Naive thymus-derived CD4-positive, alpha-beta T cell (primary cell): ENCODE measurements at regions of chr11 and their contacts with region 1.

Region 1: DNA sequence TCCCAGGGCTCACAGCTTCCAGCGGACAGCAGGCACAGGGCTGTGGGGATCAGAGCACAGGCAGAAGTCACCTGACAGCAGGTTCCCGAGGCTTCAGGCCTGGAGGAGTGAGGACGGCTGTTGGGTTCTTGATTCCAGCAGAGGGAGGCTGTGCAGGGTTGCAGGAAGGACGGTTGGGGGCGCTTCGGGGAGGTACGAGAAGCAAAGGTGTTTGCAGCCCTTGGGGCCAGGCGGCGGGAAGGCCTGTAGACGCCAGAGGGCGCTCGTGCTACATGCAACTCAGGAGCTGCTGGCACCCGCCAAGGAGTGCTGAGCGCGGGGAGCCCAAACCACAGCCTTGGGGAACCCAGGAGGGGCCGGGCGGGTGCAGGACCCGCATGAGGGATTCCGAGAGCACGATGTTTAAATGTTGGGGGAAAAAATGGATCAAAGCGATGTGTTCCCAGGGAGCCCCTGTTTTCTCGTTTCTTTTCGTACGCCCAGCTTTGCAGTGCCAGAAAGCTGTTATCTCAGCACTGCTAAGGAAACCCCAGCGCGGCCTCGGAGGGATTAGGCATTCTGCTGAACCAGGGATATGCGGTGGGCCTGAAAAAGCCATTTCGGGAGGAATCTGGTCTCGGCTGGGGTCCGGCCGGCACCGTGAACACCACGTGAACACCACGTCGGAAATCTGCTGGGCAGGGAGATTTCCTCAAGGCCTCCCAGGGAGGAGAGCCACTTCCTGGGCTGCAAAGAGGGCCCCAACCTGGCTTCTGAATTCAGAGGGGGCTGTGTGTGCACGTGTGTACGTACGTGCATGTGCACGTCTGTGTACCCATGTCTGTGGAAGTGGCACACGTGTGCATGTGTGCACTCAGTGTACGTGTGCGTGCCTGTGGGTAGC is 88.1 kb downstream of the KCNQ1 start:
- DNase-seq: peak; percentile 81 to 95 (median 89)
- ATAC-seq: peak; percentile 91
- H3K4me3 ChIP-seq: peak overlapping the region; percentile 21
- H3K4me3 Mint-ChIP-seq: peak overlapping the region; percentile 64 to 83 (median 76)
- H3K27ac ChIP-seq: no peak overlapping the region
- H3K27ac Mint-ChIP-seq: peak overlapping the region in 5 of 9 donors; percentile 5 to 88 (median 71)
- H3K4me1 ChIP-seq: peaks cover 4 to 15% of the 10 kb centered on the region in 2 donors
- H3K4me1 Mint-ChIP-seq: peaks cover 9 to 29% (median 25%) of the 10 kb centered on the region in 7 donors
- H3K27me3 ChIP-seq: no peaks in the 10 kb centered on the region
- H3K27me3 Mint-ChIP-seq: peaks cover 0 to 2% (median 0%) of the 10 kb centered on the region in 5 donors

Region 2: GRCh38 chr11:2298795-2299761 is 233.9 kb before region 1 on chr11:
- CTCF ChIA-PET with region 1: no interaction called
- POLR2A ChIA-PET with region 1: no interaction called
- intact Hi-C with region 1: loop called in 1 of 2 experiments (anchors 5 kb)
- DNase-seq: peak in 2 of 9 donors; percentile 30 to 32
- ATAC-seq: no peak
- H3K4me3 ChIP-seq: no peak overlapping the region
- H3K4me3 Mint-ChIP-seq: peak overlapping the region; percentile 52 to 98 (median 75)
- H3K27ac ChIP-seq: peak overlapping the region; percentile 58
- H3K27ac Mint-ChIP-seq: peak overlapping the region; percentile 63 to 91 (median 79)
- H3K4me1 ChIP-seq: peaks cover 30 to 44% of the 10 kb centered on the region in 2 donors
- H3K4me1 Mint-ChIP-seq: peaks cover 19 to 51% (median 38%) of the 10 kb centered on the region in 7 donors
- H3K27me3 ChIP-seq: no peaks in the 10 kb centered on the region
- H3K27me3 Mint-ChIP-seq: peaks cover 0 to 5% (median 0%) of the 10 kb centered on the region in 5 donors

Region 3: GRCh38 chr11:2377511-2378443 is 155.2 kb before region 1 on chr11:
- CTCF ChIA-PET with region 1: no interaction called
- POLR2A ChIA-PET with region 1: no interaction called
- intact Hi-C with region 1: no loop called
- DNase-seq: peak in 8 of 9 donors; percentile 34 to 73 (median 52)
- ATAC-seq: peak; percentile 54
- H3K4me3 ChIP-seq: peak overlapping the region; percentile 83
- H3K4me3 Mint-ChIP-seq: peak overlapping the region; percentile 71 to 89 (median 84)
- H3K27ac ChIP-seq: peak overlapping the region; percentile 89
- H3K27ac Mint-ChIP-seq: peak overlapping the region in 7 of 9 donors; percentile 57 to 89 (median 81)
- H3K4me1 ChIP-seq: peaks cover 19 to 21% of the 10 kb centered on the region in 2 donors
- H3K4me1 Mint-ChIP-seq: peaks cover 13 to 44% (median 20%) of the 10 kb centered on the region in 7 donors
- H3K27me3 ChIP-seq: no peaks in the 10 kb centered on the region
- H3K27me3 Mint-ChIP-seq: peaks cover 0 to 7% (median 0%) of the 10 kb centered on the region in 5 donors

Region 4: DNA sequence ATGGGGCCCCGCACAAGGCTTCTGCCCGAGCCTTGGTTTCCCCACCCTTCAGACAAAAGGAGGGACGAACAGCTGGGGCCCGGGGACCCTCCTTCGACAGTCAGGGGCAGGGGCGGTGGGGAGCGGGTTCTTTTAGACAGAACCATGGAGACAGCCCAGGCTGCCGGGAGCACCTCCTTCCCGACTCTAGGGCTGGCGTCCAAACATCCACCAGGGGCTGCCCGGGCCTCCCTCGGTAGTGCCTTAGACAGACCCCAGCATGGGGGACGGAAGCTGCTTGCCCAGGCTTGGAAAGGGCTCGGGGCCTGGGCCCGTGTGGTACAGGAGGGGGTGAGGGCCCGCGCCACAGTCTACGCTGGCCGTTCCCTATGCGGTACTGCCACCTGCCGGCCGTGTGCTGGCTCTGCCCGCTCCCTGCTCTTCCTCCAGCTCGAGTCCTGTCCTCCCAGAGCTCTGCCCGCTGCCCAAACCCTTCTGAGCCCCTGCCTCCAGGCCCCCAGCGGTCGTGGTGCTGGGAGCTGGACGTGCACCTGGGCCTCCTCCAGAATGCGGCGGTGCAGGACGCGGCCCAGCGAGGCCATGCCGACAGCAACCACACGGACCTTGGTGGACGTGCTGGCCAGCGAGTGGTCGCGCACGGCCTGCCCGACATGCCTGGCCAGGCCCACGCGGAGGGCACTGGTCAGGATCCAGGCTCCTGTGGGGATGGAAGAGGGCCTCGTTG is 112.3 kb before region 1 on chr11:
- CTCF ChIA-PET with region 1: interaction called, 77 read pairs
- POLR2A ChIA-PET with region 1: no interaction called
- intact Hi-C with region 1: no loop called
- DNase-seq: peak; percentile 44 to 74 (median 70)
- ATAC-seq: peak; percentile 93
- H3K4me3 ChIP-seq: no peak overlapping the region
- H3K4me3 Mint-ChIP-seq: no peak overlapping the region
- H3K27ac ChIP-seq: no peak overlapping the region
- H3K27ac Mint-ChIP-seq: no peak overlapping the region
- H3K4me1 ChIP-seq: peaks cover 0 to 10% of the 10 kb centered on the region in 2 donors
- H3K4me1 Mint-ChIP-seq: peaks cover 0 to 3% (median 2%) of the 10 kb centered on the region in 7 donors
- H3K27me3 ChIP-seq: no peaks in the 10 kb centered on the region
- H3K27me3 Mint-ChIP-seq: no peaks in the 10 kb centered on the region

Region 5: DNA sequence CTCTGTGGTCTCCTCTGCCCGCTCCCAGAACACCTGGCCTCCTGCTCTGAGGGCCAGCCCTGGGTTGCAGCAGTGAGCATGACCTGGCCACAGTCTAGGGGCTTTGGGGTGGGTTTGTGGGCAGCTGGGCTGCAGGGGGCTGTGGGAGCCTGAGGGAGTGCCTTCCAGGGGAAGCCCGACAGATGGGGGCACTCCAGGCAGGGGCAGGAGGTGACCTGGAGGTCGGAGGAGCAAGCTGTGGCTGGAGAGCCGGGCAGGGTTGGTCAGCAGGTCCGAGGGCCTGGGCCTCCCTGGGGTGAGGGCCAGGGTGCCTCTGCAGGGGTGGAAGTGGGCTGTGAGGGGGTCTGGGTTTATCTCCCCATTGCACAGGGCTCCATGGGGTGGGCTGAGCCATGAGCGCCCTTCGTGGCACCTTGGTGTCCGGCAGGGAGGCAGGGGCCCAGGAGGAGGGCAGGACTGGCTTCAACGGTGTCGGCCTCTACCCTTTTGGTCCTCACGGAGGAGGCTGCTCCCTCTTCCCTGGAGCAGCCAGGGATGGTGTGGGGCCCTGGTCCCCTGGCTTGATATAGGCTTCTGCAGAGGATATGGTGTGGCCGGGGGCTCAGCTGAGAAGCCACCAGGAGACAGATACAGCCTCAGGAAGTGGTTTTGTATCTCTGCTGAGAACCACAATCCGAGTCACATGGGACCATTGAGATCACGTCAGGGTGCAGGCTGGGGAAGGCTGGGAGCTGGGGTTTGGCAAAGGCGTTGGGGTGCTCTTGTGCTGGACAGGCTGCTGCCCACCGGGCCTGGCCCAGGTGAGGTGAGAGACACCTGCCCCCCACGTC is 65.9 kb before region 1 on chr11:
- CTCF ChIA-PET with region 1: interaction called, 9 read pairs
- POLR2A ChIA-PET with region 1: no interaction called
- intact Hi-C with region 1: loop called in 1 of 2 experiments (anchors 2 kb)
- DNase-seq: peak in 8 of 9 donors; percentile 53 to 80 (median 74)
- ATAC-seq: peak; percentile 95
- H3K4me3 ChIP-seq: peak overlapping the region; percentile 45
- H3K4me3 Mint-ChIP-seq: peak overlapping the region; percentile 75 to 93 (median 84)
- H3K27ac ChIP-seq: peak overlapping the region; percentile 52
- H3K27ac Mint-ChIP-seq: peak overlapping the region; percentile 57 to 96 (median 79)
- H3K4me1 ChIP-seq: peaks cover 17 to 57% of the 10 kb centered on the region in 2 donors
- H3K4me1 Mint-ChIP-seq: peaks cover 35 to 93% (median 65%) of the 10 kb centered on the region in 7 donors
- H3K27me3 ChIP-seq: no peaks in the 10 kb centered on the region
- H3K27me3 Mint-ChIP-seq: peaks cover 0 to 12% (median 0%) of the 10 kb centered on the region in 5 donors

Region 6: DNA sequence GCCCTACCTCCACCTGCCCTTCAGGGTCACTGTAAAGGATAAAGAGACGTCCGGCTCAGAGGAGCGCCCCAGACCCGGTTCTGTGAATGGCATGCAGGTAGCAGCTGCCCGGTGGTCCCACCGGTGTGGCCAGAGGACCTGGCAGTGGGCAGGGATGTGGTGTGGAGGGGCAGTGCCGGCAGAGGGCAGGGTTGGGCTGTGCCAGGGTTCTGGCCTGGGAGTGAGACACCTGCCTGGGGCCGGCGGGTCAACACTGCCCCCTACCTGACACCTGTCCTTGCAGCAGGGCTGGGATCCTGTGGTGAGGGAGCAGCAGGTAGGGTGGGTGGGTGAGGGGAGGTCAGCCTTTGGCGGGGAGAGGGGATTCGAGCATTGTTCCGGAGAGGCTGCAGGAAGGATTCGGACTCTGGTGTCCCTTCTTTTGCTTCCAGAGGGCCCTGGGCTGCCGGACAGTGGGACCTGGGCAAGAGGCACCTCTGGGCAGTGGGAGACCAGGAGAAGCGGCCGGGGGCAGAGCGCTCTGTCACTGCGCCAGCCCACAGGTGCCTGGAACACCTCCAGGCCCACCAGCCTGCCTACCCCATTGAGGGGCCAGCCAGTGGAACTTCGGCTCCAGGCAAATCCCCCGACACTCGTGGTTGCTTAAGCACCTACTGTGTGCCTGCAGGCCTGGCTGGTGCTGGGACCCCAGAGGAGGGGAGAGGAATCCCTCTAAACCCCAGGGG is 397.9 kb after region 1 on chr11:
- CTCF ChIA-PET with region 1: interaction called, 10 read pairs
- POLR2A ChIA-PET with region 1: no interaction called
- intact Hi-C with region 1: loop called (anchors 1 kb)
- DNase-seq: peak in 1 of 9 donors; percentile 61
- ATAC-seq: peak; percentile 14
- H3K4me3 ChIP-seq: peak overlapping the region; percentile 61
- H3K4me3 Mint-ChIP-seq: peak overlapping the region; percentile 66 to 86 (median 78)
- H3K27ac ChIP-seq: no peak overlapping the region
- H3K27ac Mint-ChIP-seq: peak overlapping the region in 4 of 9 donors; percentile 32 to 76 (median 46)
- H3K4me1 ChIP-seq: peaks cover 13 to 20% of the 10 kb centered on the region in 2 donors
- H3K4me1 Mint-ChIP-seq: peaks cover 14 to 35% (median 20%) of the 10 kb centered on the region in 7 donors
- H3K27me3 ChIP-seq: peaks cover 3 to 4% of the 10 kb centered on the region in 2 donors
- H3K27me3 Mint-ChIP-seq: peaks cover 4 to 30% (median 8%) of the 10 kb centered on the region in 5 donors

Region 7: GRCh38 chr11:3091791-3092602 is 559.1 kb after region 1 on chr11:
- CTCF ChIA-PET with region 1: interaction called, 64 read pairs
- POLR2A ChIA-PET with region 1: no interaction called
- intact Hi-C with region 1: loop called in 1 of 2 experiments (anchors 1 kb)
- DNase-seq: peak; percentile 38 to 79 (median 66)
- ATAC-seq: peak; percentile 87
- H3K4me3 ChIP-seq: no peak overlapping the region
- H3K4me3 Mint-ChIP-seq: no peak overlapping the region
- H3K27ac ChIP-seq: no peak overlapping the region
- H3K27ac Mint-ChIP-seq: peak overlapping the region in 1 of 9 donors; percentile 26
- H3K4me1 ChIP-seq: no peaks in the 10 kb centered on the region
- H3K4me1 Mint-ChIP-seq: peaks cover 0 to 16% (median 0%) of the 10 kb centered on the region in 7 donors
- H3K27me3 ChIP-seq: no peaks in the 10 kb centered on the region
- H3K27me3 Mint-ChIP-seq: peaks cover 0 to 4% (median 0%) of the 10 kb centered on the region in 5 donors